H1 (cell line): ENCODE measurements at regions of chr3 and their contacts with region 1.

Region 1: GRCh38 chr3:16190704-16191103 is 16.2 kb downstream of the GALNT15 start:
- DNase-seq: no peak
- H3K4me3 ChIP-seq: no peak overlapping the region
- H3K27ac ChIP-seq: no peak overlapping the region
- H3K4me1 ChIP-seq: no peaks in the 10 kb centered on the region
- H3K27me3 ChIP-seq: no peaks in the 10 kb centered on the region; a peak in 1 of 7 replicates
- CTCF ChIP-seq: no peak
- EP300 ChIP-seq: no peak
- POLR2A ChIP-seq: no peak
- RAD21 ChIP-seq: no peak

Region 2: DNA sequence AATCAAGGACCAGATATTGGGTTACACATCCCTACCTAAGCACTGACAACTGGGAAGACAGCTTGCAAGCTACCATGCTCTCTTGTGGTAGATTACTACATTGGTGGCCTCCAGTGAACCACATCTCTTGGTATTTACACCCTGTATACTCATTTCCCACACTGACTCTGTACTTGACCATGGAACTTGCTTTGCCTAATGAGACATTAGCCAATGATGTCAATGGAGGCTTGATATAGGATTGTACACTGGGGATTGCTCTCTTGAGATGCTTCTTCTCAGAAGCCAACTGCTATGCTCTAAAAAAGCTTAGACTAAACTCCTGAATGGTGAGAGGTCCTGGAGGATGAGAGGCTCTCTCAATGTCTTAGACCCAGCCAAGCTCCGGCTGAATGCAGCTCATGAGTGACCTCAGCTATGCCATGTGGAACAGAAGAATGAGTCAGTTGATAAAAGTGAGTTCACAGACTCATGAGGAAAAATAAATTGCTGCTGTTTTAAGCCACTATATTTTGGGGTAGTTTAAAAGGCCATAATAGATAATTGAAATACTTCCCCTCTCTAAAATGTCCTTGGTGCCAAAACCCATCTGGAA is 77.7 kb before region 1 on chr3:
- CTCF ChIA-PET with region 1: no interaction called
- POLR2A ChIA-PET with region 1: no interaction called
- DNase-seq: no peak
- H3K4me3 ChIP-seq: no peak overlapping the region
- H3K27ac ChIP-seq: no peak overlapping the region
- H3K4me1 ChIP-seq: no peaks in the 10 kb centered on the region
- H3K27me3 ChIP-seq: no peaks in the 10 kb centered on the region
- CTCF ChIP-seq: no peak
- EP300 ChIP-seq: no peak
- POLR2A ChIP-seq: no peak
- RAD21 ChIP-seq: no peak

Region 3: GRCh38 chr3:16177962-16178627 is 12.6 kb before region 1 on chr3:
- CTCF ChIA-PET with region 1: interaction called, 24 read pairs
- POLR2A ChIA-PET with region 1: no interaction called
- DNase-seq: peak; percentile 75 to 96
- H3K4me3 ChIP-seq: no peak overlapping the region
- H3K27ac ChIP-seq: no peak overlapping the region
- H3K4me1 ChIP-seq: peaks cover 0 to 3% (median 0%) of the 10 kb centered on the region in 4 experiments; a peak in 1 of 7 replicates
- H3K27me3 ChIP-seq: no peaks in the 10 kb centered on the region
- CTCF ChIP-seq: peak; percentile 97 to 100 (median 99)
- EP300 ChIP-seq: peak in 1 of 2 experiments; percentile 25; a peak in 1 of 3 replicates
- POLR2A ChIP-seq: no peak
- RAD21 ChIP-seq: peak; percentile 98

Region 4: GRCh38 chr3:16227566-16227965 is 36.9 kb after region 1 on chr3:
- CTCF ChIA-PET with region 1: no interaction called
- POLR2A ChIA-PET with region 1: no interaction called
- DNase-seq: no peak
- H3K4me3 ChIP-seq: no peak overlapping the region
- H3K27ac ChIP-seq: no peak overlapping the region
- H3K4me1 ChIP-seq: no peaks in the 10 kb centered on the region
- H3K27me3 ChIP-seq: no peaks in the 10 kb centered on the region
- CTCF ChIP-seq: no peak
- EP300 ChIP-seq: no peak
- POLR2A ChIP-seq: no peak
- RAD21 ChIP-seq: no peak